A549 (cell line): ENCODE measurements at regions of chr21 and their contacts with region 1.

Region 1: GRCh38 chr21:32597205-32597604 is 11.9 kb upstream of the TCP10L start:
- DNase-seq: peak; percentile 12 to 56
- ATAC-seq: peak; percentile 65 to 88
- H3K4me3 ChIP-seq: no peak overlapping the region
- H3K27ac ChIP-seq: peak overlapping the region in 1 of 2 experiments; percentile 73; a peak in 3 of 6 replicates
- H3K4me1 ChIP-seq: peaks cover 14% of the 10 kb centered on the region; the same call in 2 of the 3 replicates
- CTCF ChIP-seq: no peak
- EP300 ChIP-seq: no peak
- POLR2A ChIP-seq: no peak
- RAD21 ChIP-seq: no peak

Region 2: GRCh38 chr21:32382108-32382644 is 215.0 kb before region 1 on chr21:
- CTCF ChIA-PET with region 1: interaction called, 15 read pairs
- POLR2A ChIA-PET with region 1: no interaction called
- DNase-seq: peak in 1 of 2 experiments; percentile 55
- ATAC-seq: peak; percentile 66 to 67; a peak in 5 of 6 replicates
- H3K4me3 ChIP-seq: no peak overlapping the region; the same call in 2 of the 3 replicates
- H3K27ac ChIP-seq: peak overlapping the region; percentile 73 to 80
- H3K4me1 ChIP-seq: peaks cover 64% of the 10 kb centered on the region
- CTCF ChIP-seq: no peak
- EP300 ChIP-seq: peak in 1 of 2 experiments; percentile 70; a peak in 2 of 5 replicates
- POLR2A ChIP-seq: no peak
- RAD21 ChIP-seq: no peak

Region 3: GRCh38 chr21:32412162-32413014 is 184.8 kb before region 1 on chr21 and contains the start of gene EVA1C:
- CTCF ChIA-PET with region 1: interaction called, 100 read pairs
- POLR2A ChIA-PET with region 1: interaction called, 3 read pairs
- DNase-seq: peak; percentile 51 to 58
- ATAC-seq: peak; percentile 70 to 80
- H3K4me3 ChIP-seq: peak within 1 kb of the TSS; percentile 58
- H3K27ac ChIP-seq: peak within 1 kb of the TSS; percentile 98 to 100
- H3K4me1 ChIP-seq: peaks cover 35% of the 10 kb centered on the region
- CTCF ChIP-seq: no peak
- EP300 ChIP-seq: peak in 1 of 2 experiments; percentile 42; a peak in 1 of 5 replicates
- POLR2A ChIP-seq: peak; percentile 37
- RAD21 ChIP-seq: no peak
- polyA plus RNA-seq, gene EVA1C: 41.1 and 45.5 TPM in 2 replicates

Region 4: DNA sequence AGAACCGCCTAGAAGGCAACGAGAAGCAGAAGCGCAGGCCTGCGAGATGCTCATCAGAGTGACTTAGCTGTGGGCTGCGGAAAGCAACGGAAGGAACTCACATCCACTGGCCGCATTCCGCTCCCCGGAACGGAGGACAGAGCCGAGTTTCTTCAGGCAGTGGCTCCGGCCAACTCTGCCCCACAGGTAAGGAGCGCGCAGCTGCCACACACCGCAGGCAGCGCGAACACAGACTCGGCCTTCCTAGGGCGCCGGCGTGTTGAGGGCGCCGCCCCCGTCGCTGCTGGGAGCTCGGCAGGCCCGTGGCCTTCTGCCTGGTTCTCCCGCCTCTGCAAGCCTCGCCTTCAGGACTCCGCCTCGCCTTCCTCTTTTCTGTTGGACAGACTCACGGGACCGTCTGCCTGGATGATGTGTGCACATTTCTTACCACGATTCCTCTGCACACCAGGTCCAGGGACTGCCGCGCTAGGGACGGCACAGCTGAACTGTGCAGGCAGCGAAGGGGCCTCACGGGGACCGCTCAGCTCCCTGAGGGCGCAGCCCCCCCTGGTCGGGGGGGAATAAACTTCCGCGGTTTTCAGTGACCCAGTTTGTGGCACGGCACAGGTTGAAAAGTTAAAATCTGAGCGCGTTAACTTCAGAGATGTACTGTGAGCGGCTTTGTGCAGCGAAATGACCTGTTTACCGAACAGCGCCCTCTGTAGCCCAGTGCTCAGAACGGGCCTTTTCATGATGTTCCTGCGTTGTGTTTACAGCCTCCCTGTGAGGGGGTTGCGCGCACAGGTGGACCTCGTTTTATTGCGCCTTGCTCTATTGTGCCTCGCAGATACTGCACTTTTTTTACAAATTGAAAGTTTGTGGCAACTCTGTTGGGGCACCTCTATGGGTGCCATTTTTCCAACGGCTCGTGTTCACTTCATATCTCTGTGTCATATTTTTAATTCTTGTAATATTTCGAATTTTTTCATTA is 27.7 kb before region 1 on chr21:
- CTCF ChIA-PET with region 1: interaction called, 13 read pairs
- POLR2A ChIA-PET with region 1: interaction called, 3 read pairs
- DNase-seq: peak; percentile 66 to 80
- ATAC-seq: peak; percentile 97 to 98
- H3K4me3 ChIP-seq: peak overlapping the region; percentile 66
- H3K27ac ChIP-seq: peak overlapping the region; percentile 94 to 95
- H3K4me1 ChIP-seq: 0 out of 3 replicates have a peak, but pooled peaks cover 8% of the 10 kb centered on the region
- CTCF ChIP-seq: peak; percentile 76
- EP300 ChIP-seq: no peak
- POLR2A ChIP-seq: peak; percentile 36; the same call in 1 of the 2 replicates
- RAD21 ChIP-seq: peak; percentile 49 to 57

Region 5: GRCh38 chr21:32587120-32587519 is 10.1 kb before region 1 on chr21:
- CTCF ChIA-PET with region 1: interaction called, 18 read pairs
- POLR2A ChIA-PET with region 1: no interaction called
- DNase-seq: no peak
- ATAC-seq: no peak
- H3K4me3 ChIP-seq: no peak overlapping the region
- H3K27ac ChIP-seq: no peak overlapping the region
- H3K4me1 ChIP-seq: no peaks in the 10 kb centered on the region
- CTCF ChIP-seq: no peak
- EP300 ChIP-seq: no peak
- POLR2A ChIP-seq: no peak
- RAD21 ChIP-seq: no peak